K562 (cell line): ENCODE measurements at regions of chr3 and their contacts with region 1.

Region 1: GRCh38 chr3:72319194-72320094 is 528.8 kb downstream of the SHQ1 start:
- DNase-seq: peak; percentile 40 to 86 (median 66)
- ATAC-seq: peak; percentile 74
- H3K4me3 ChIP-seq: no peak overlapping the region
- H3K27ac ChIP-seq: peak overlapping the region; percentile 75
- H3K4me1 ChIP-seq: peaks cover 36 to 51% of the 10 kb centered on the region in 2 experiments
- H3K27me3 ChIP-seq: no peaks in the 10 kb centered on the region
- CTCF ChIP-seq: no peak
- EP300 ChIP-seq: peak; percentile 78
- POLR2A ChIP-seq: no peak; the same call in 1 of the 2 replicates
- RAD21 ChIP-seq: no peak; a peak in 1 of 4 replicates

Region 2: GRCh38 chr3:72288955-72289691 is 30.3 kb before region 1 on chr3:
- CTCF ChIA-PET with region 1: no interaction called
- POLR2A ChIA-PET with region 1: interaction called, 3 read pairs
- in situ Hi-C with region 1: no loop called
- intact Hi-C with region 1: loop called (anchors 5 kb)
- DNase-seq: peak; percentile 28 to 88 (median 58)
- ATAC-seq: peak; percentile 70
- H3K4me3 ChIP-seq: peak overlapping the region; percentile 26
- H3K27ac ChIP-seq: peak overlapping the region; percentile 78
- H3K4me1 ChIP-seq: peaks cover 41 to 55% of the 10 kb centered on the region in 2 experiments
- H3K27me3 ChIP-seq: no peaks in the 10 kb centered on the region
- CTCF ChIP-seq: no peak
- EP300 ChIP-seq: peak; percentile 96
- POLR2A ChIP-seq: peak; percentile 52
- RAD21 ChIP-seq: peak in 1 of 2 experiments; percentile 32; a peak in 1 of 4 replicates

Region 3: DNA sequence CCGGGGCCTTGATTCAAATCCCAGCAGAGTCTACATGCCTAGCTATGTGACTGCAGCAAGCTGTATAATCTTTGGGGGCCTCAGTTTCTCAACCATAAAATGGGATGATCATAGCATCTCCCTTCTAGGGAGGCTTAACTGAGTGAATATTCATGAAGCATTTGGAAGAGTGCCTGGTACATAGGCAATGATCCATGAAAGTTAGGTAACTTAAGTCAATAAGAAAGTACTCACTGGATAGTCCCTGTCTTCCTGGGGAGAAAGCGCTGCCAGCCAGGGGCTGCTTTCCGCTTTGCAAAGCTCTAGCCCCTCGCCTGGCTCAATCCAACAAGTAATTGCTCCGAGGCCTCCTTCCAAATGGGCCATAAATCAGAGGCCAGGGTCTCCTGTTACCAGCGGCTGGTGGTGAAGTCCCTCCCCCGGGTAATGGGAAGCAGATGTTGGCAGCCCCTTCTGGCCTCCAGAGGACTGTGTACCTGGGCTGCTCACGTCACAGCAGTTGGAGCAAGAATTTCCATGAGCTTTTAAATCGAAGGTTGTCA is 12.6 kb before region 1 on chr3:
- CTCF ChIA-PET with region 1: no interaction called
- POLR2A ChIA-PET with region 1: interaction called, 13 read pairs
- in situ Hi-C with region 1: no loop called
- intact Hi-C with region 1: no loop called
- DNase-seq: no peak
- ATAC-seq: no peak
- H3K4me3 ChIP-seq: no peak overlapping the region
- H3K27ac ChIP-seq: no peak overlapping the region
- H3K4me1 ChIP-seq: peaks cover 13 to 27% of the 10 kb centered on the region in 2 experiments
- H3K27me3 ChIP-seq: no peaks in the 10 kb centered on the region
- CTCF ChIP-seq: no peak
- EP300 ChIP-seq: no peak
- POLR2A ChIP-seq: no peak
- RAD21 ChIP-seq: no peak